ENCODE measurements at regions of chr9 and their contacts with region 1.

Region 1: GRCh38 chr9:36995927-36996705 is 38.0 kb downstream of the PAX5 start:
- DNase-seq: peak; percentile 88
- ATAC-seq: peak; percentile 88
- H3K4me3 Mint-ChIP-seq: peak overlapping the region; percentile 37
- H3K27ac Mint-ChIP-seq: no peak overlapping the region
- H3K4me1 Mint-ChIP-seq: peaks cover 21% of the 10 kb centered on the region
- H3K27me3 Mint-ChIP-seq: peaks cover 43% of the 10 kb centered on the region
- CTCF ChIP-seq: peak; percentile 45; the same call in 1 of the 2 replicates

Region 2: DNA sequence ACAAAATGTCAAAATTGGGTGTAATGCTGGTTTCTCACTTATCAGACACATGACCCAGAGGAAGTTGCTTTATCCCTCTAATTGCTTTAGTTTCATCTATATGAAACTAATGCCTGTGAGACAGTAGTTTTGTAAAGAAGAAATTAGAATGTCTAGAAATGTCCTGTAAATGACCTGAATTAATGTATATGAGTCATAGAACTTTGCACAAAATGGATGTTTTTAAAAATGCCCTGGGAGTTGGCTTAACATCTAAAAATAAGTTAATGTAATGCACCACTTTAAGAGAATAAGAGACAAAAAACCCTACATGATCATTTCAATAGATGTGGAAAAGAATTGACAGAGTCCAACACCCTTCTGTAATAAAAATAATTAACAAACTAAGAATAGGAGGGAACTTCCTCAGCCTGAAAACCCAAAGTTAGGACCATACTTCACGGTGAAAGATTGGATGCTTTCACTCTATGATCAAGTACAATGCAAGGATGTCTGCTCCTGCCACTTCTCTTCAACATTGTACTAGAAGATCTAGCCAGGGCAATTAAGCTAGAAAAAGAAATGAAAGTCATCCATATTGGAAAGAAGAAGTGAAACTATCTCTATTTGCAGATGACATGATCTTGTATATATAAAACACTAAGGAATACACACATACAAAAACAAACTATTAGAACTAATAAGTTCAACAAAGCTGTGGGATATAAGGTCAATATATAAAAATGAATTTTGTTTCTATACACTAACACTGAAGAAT is 305.5 kb before region 1 on chr9:
- CTCF ChIA-PET with region 1: no interaction called
- POLR2A ChIA-PET with region 1: no interaction called
- DNase-seq: no peak
- ATAC-seq: no peak
- H3K4me3 Mint-ChIP-seq: no peak overlapping the region
- H3K27ac Mint-ChIP-seq: no peak overlapping the region
- H3K4me1 Mint-ChIP-seq: no peaks in the 10 kb centered on the region
- H3K27me3 Mint-ChIP-seq: no peaks in the 10 kb centered on the region; the same call in 1 of the 2 replicates
- CTCF ChIP-seq: no peak

Region 3: GRCh38 chr9:36867672-36868471 is 128.2 kb before region 1 on chr9:
- CTCF ChIA-PET with region 1: interaction called, 232 read pairs
- POLR2A ChIA-PET with region 1: no interaction called
- DNase-seq: no peak
- ATAC-seq: no peak
- H3K4me3 Mint-ChIP-seq: no peak overlapping the region
- H3K27ac Mint-ChIP-seq: no peak overlapping the region
- H3K4me1 Mint-ChIP-seq: peaks cover 30% of the 10 kb centered on the region
- H3K27me3 Mint-ChIP-seq: peaks cover 34% of the 10 kb centered on the region
- CTCF ChIP-seq: no peak

Region 4: GRCh38 chr9:36980148-36980974 is 15.8 kb before region 1 on chr9:
- CTCF ChIA-PET with region 1: interaction called, 57 read pairs
- POLR2A ChIA-PET with region 1: interaction called, 3 read pairs
- DNase-seq: peak; percentile 75
- ATAC-seq: peak; percentile 97
- H3K4me3 Mint-ChIP-seq: no peak overlapping the region
- H3K27ac Mint-ChIP-seq: no peak overlapping the region
- H3K4me1 Mint-ChIP-seq: peaks cover 24% of the 10 kb centered on the region
- H3K27me3 Mint-ChIP-seq: peaks cover 43% of the 10 kb centered on the region
- CTCF ChIP-seq: no peak

Region 5: DNA sequence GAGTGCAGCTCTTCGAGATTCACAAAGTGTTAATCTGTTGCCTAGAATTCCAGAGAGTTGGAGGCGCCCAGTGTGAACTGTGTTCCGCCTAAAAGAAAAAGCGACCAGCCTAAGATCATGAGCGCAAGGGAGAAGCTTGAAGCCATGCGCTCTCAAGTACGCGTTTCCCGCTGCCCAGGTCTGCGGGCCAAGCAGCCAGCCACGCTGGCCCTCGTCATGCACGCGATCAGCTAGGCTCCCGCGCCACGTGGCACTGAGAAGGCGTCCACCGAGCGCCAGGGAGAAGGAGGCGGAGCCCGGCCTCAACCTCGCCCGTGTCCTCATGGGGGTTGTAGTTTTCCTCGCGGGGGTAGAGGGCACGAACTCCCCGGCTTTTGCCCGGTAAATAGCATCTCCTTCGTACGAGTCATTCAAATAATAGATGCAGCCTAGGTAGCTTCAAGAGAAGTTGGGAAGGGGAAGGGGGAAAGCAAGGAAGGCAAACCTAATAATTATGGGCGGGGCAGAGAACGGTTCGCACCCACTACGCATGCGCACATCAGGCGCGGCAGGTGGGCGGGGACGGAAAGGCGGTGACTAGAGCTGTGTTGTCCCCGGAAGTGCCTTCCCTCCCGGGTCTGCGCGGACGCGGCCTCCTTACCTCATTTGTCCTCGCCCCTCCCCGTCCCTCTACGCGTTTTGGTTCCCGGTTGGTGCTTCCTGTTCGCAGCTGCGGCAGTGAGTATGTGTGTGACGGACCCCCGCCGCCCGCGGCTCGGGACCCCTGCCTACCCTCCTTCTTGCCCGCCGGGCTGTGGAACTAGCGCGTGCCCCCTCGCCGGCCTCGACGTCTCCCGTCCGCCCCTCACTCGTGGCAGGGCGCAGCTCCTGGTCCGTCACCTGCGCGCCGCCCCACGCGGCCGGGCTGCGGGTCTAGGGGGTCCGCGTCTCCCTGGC is 124.1 kb after region 1 on chr9 and contains the start of gene ZCCHC7:
- CTCF ChIA-PET with region 1: interaction called, 20 read pairs
- POLR2A ChIA-PET with region 1: no interaction called
- DNase-seq: peak; percentile 98
- ATAC-seq: peak; percentile 97
- H3K4me3 Mint-ChIP-seq: peak within 1 kb of the TSS; percentile 97
- H3K27ac Mint-ChIP-seq: peak within 1 kb of the TSS; percentile 98
- H3K4me1 Mint-ChIP-seq: peaks cover 27% of the 10 kb centered on the region
- H3K27me3 Mint-ChIP-seq: peaks cover 14% of the 10 kb centered on the region
- CTCF ChIP-seq: no peak
- total RNA-seq, gene ZCCHC7: 25.6 to 30.1 TPM (median 27.2 TPM) in 3 replicates

Region 6: DNA sequence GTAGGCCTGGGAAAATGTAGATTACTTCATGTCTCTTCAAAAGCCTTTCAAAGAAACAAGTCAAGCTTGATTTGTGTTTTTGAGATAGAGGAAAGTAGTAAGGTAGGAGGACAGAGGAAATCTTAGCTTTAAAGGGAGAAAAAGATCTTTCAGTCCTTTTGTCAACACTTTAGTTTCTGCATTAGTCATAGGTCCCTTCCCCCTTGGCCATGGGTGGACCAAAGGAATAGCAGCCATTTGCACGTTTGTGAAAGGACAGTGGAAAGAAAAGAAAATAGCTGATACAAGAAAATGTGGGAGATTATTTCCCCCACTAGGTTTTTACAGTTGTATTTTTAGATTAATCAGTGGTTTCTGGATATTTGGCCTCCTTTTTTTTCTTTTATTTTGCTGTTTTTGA is 304.5 kb after region 1 on chr9:
- CTCF ChIA-PET with region 1: interaction called, 10 read pairs
- POLR2A ChIA-PET with region 1: no interaction called
- DNase-seq: no peak
- ATAC-seq: no peak
- H3K4me3 Mint-ChIP-seq: no peak overlapping the region
- H3K27ac Mint-ChIP-seq: peak overlapping the region; percentile 81
- H3K4me1 Mint-ChIP-seq: peaks cover 6% of the 10 kb centered on the region
- H3K27me3 Mint-ChIP-seq: no peaks in the 10 kb centered on the region
- CTCF ChIP-seq: no peak

Region 7: GRCh38 chr9:37371565-37372464 is 375.7 kb after region 1 on chr9:
- CTCF ChIA-PET with region 1: interaction called, 13 read pairs
- POLR2A ChIA-PET with region 1: interaction called, 3 read pairs
- DNase-seq: no peak
- ATAC-seq: no peak; the same call in 1 of the 2 replicates
- H3K4me3 Mint-ChIP-seq: no peak overlapping the region
- H3K27ac Mint-ChIP-seq: no peak overlapping the region
- H3K4me1 Mint-ChIP-seq: peaks cover 4% of the 10 kb centered on the region
- H3K27me3 Mint-ChIP-seq: no peaks in the 10 kb centered on the region; the same call in 1 of the 2 replicates
- CTCF ChIP-seq: no peak